CD4-positive, alpha-beta memory T cell (primary cell): ENCODE measurements at regions of chr6 and their contacts with region 1.

Region 1: GRCh38 chr6:116561377-116562018 is 7.9 kb downstream of the CALHM4 start:
- DNase-seq: peak; percentile 59 to 69 (median 64)
- H3K4me3 ChIP-seq: no peak overlapping the region
- H3K4me3 Mint-ChIP-seq: no peak overlapping the region
- H3K27ac ChIP-seq: no peak overlapping the region
- H3K27ac Mint-ChIP-seq: peak overlapping the region in 2 of 7 donors; percentile 24 to 63
- H3K4me1 ChIP-seq: no peaks in the 10 kb centered on the region
- H3K4me1 Mint-ChIP-seq: peaks cover 0 to 2% (median 1%) of the 10 kb centered on the region in 4 donors
- H3K27me3 ChIP-seq: no peaks in the 10 kb centered on the region
- H3K27me3 Mint-ChIP-seq: peaks cover 9 to 16% of the 10 kb centered on the region in 2 donors

Region 2: DNA sequence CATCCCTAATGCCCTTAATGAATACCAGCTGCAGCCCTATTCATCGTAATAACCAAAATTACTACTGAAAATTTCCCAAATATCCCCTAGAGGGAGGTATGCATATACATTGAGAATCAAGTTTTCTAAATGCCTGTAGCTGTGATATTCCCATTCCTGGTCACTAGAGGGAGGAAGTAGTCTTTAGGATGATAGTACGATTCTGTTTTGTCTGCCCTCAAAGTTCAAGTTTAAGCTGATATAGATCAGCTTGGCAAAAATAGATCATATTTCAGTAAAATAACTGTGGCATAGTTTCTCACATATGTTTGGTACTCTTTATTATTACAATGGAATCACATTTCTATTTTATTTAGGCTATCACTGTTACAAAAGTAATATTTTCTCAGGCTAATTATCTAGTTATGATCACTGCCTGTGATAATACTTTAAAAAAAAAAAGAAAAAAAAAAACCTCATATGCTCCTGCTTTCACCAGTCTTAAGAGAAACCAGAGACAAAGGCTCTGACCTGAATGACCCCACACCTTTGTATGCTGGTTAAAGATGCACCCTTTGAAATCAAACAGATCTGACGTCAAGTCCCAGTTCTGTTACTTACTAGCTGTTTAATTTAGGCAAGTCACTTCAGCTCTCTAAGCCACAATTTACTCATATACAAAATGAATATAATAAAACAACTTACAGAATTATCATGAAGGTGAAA is 292.8 kb before region 1 on chr6:
- CTCF ChIA-PET with region 1: interaction called, 21 read pairs
- POLR2A ChIA-PET with region 1: no interaction called
- intact Hi-C with region 1: no loop called
- DNase-seq: peak in 4 of 5 donors; percentile 44 to 50 (median 46)
- H3K4me3 ChIP-seq: no peak overlapping the region
- H3K4me3 Mint-ChIP-seq: no peak overlapping the region
- H3K27ac ChIP-seq: no peak overlapping the region
- H3K27ac Mint-ChIP-seq: peak overlapping the region; percentile 4 to 82 (median 65)
- H3K4me1 ChIP-seq: peaks cover 25% of the 10 kb centered on the region
- H3K4me1 Mint-ChIP-seq: peaks cover 16 to 29% (median 24%) of the 10 kb centered on the region in 4 donors
- H3K27me3 ChIP-seq: no peaks in the 10 kb centered on the region
- H3K27me3 Mint-ChIP-seq: no peaks in the 10 kb centered on the region

Region 3: DNA sequence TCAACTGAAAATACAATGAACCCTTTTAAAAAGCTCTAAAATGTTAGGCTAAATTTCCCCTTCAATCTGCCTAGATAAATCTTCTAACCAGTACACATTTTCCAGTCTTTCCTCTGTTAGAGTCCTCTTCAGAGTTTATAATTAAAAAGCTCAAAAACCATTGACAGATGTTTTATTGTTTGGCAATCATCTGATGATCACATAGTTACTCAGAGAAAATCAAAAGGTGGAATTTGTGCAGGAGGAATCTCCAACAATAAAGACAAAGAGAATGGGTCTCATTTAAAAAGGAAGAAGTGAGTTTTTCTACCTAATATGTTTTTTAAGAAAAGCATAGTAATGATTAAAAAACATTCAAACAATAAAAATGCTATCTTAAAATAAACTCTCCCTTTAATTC is 19.1 kb before region 1 on chr6:
- CTCF ChIA-PET with region 1: interaction called, 12 read pairs
- POLR2A ChIA-PET with region 1: no interaction called
- intact Hi-C with region 1: no loop called
- DNase-seq: no peak
- H3K4me3 ChIP-seq: no peak overlapping the region
- H3K4me3 Mint-ChIP-seq: no peak overlapping the region
- H3K27ac ChIP-seq: no peak overlapping the region
- H3K27ac Mint-ChIP-seq: no peak overlapping the region
- H3K4me1 ChIP-seq: no peaks in the 10 kb centered on the region
- H3K4me1 Mint-ChIP-seq: no peaks in the 10 kb centered on the region
- H3K27me3 ChIP-seq: no peaks in the 10 kb centered on the region
- H3K27me3 Mint-ChIP-seq: peaks cover 19 to 22% of the 10 kb centered on the region in 2 donors

Region 4: DNA sequence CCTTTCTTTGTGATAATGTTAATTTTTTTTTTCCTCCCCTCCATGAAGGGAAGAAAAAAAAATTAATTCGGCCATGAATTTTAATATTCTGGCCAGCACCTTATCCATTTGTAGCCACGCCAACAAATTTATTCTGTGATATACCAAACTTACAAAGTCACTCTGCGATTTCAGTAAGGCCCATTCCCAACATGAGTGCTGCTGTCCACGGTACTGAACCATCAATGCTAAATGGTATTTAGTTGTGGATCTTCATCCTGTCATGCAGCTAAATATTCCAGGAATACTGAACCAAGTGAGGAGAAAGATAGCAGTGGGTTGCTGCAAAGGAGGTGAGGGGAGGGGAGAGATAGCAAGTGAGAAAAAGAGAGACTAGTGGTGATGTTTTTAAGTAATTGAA is 35.3 kb after region 1 on chr6:
- CTCF ChIA-PET with region 1: no interaction called
- POLR2A ChIA-PET with region 1: no interaction called
- intact Hi-C with region 1: no loop called
- DNase-seq: no peak
- H3K4me3 ChIP-seq: no peak overlapping the region
- H3K4me3 Mint-ChIP-seq: no peak overlapping the region
- H3K27ac ChIP-seq: no peak overlapping the region
- H3K27ac Mint-ChIP-seq: no peak overlapping the region
- H3K4me1 ChIP-seq: no peaks in the 10 kb centered on the region
- H3K4me1 Mint-ChIP-seq: no peaks in the 10 kb centered on the region
- H3K27me3 ChIP-seq: no peaks in the 10 kb centered on the region
- H3K27me3 Mint-ChIP-seq: no peaks in the 10 kb centered on the region